IMR-90 (cell line): ENCODE measurements at regions of chr6 and their contacts with region 1.

Region 1: DNA sequence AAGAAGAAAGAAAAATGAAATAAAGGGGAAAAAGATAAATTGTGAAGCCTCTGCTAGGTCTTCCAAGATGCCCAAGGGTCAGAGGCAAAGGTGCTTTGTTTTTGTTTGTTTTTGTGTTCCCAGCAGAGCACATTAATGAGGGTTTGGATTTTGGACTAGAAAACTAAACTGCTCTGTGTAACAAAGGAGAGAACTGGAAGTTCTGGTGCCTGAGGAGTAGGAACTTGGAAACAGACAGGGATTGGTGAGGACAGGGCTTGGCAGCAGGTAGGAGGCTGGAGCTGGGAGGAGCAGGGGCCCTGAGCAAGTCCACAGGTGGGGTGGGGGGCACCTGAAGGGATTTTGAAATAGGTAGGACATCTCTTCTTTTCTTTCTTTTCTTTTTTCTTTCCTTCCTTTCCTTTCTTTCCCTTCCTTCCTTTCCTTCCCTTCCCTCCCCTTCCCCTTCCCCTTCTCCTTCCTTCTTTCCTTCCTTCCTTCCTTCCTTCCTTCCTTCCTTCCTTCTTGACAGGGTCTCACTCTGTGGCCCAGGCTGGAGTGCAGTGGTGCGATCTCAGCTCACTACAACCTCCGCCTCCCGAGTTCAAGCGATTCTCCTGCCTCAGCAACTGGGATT is 15.3 kb upstream of the ABRACL start:
- DNase-seq: no peak
- ATAC-seq: no peak
- H3K4me3 ChIP-seq: no peak overlapping the region
- H3K27ac ChIP-seq: no peak overlapping the region
- H3K4me1 ChIP-seq: no peaks in the 10 kb centered on the region
- H3K27me3 ChIP-seq: peaks cover 16% of the 10 kb centered on the region
- CTCF ChIP-seq: no peak
- POLR2A ChIP-seq: no peak
- RAD21 ChIP-seq: no peak

Region 2: GRCh38 chr6:138785980-138786379 is 227.3 kb before region 1 on chr6:
- CTCF ChIA-PET with region 1: no interaction called
- POLR2A ChIA-PET with region 1: interaction called, 13 read pairs
- dilution Hi-C with region 1: no loop called
- in situ Hi-C with region 1: no loop called
- intact Hi-C with region 1: no loop called
- DNase-seq: peak; percentile 7
- ATAC-seq: no peak
- H3K4me3 ChIP-seq: no peak overlapping the region
- H3K27ac ChIP-seq: no peak overlapping the region
- H3K4me1 ChIP-seq: no peaks in the 10 kb centered on the region
- H3K27me3 ChIP-seq: no peaks in the 10 kb centered on the region
- CTCF ChIP-seq: no peak
- POLR2A ChIP-seq: no peak
- RAD21 ChIP-seq: no peak